ENCODE measurements at regions of chr1 and their contacts with region 1.

Region 1: GRCh38 chr1:165597883-165598675 is 33.0 kb upstream of the MGST3 start:
- DNase-seq: peak; percentile 98
- H3K4me3 ChIP-seq: peak overlapping the region; percentile 50
- H3K27ac ChIP-seq: peak overlapping the region; percentile 58
- H3K4me1 ChIP-seq: no peaks in the 10 kb centered on the region
- H3K27me3 ChIP-seq: peaks cover 15% of the 10 kb centered on the region
- CTCF ChIP-seq: no peak

Region 2: GRCh38 chr1:165129568-165130164 is 468.4 kb before region 1 on chr1:
- CTCF ChIA-PET with region 1: no interaction called
- POLR2A ChIA-PET with region 1: no interaction called
- intact Hi-C with region 1: loop called (anchors 5 kb)
- DNase-seq: peak; percentile 81
- H3K4me3 ChIP-seq: no peak overlapping the region
- H3K27ac ChIP-seq: no peak overlapping the region
- H3K4me1 ChIP-seq: no peaks in the 10 kb centered on the region
- H3K27me3 ChIP-seq: peaks cover 59% of the 10 kb centered on the region
- CTCF ChIP-seq: peak; percentile 91

Region 3: GRCh38 chr1:165257969-165258459 is 340.1 kb before region 1 on chr1:
- CTCF ChIA-PET with region 1: no interaction called
- POLR2A ChIA-PET with region 1: no interaction called
- intact Hi-C with region 1: loop called (anchors 2 kb)
- DNase-seq: peak; percentile 86
- H3K4me3 ChIP-seq: no peak overlapping the region
- H3K27ac ChIP-seq: no peak overlapping the region
- H3K4me1 ChIP-seq: no peaks in the 10 kb centered on the region
- H3K27me3 ChIP-seq: peaks cover 1% of the 10 kb centered on the region
- CTCF ChIP-seq: peak; percentile 93

Region 4: DNA sequence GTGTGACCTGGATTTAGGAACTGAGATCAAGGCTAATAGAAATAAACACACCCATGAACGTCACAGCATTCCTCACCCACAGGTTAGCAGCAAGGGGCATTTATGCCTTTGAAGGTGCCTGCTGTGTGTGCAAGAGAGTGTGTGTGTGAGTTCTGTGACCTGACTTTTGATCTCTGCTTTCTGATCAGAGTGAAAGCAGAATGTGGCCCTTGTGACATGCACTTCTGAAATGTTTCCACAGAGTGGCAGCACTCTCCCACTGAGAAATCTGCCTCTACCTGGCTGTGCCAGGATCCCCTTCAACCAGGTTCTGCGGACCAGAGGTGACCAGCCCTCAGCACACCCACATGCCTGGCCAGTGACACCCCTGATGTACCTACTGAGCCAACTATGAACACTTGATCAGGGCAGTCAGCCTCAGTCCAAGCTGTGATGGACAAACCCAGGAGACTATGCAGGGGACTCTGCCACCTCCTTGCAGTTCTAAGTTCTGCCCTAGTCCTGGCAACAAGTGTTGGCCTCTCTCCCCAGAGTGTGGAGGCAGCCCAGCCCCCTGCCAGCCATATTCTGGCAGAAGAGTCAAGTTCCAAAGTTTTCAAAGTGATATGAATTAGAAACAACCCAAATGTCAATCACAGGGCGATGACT is 194.1 kb before region 1 on chr1:
- CTCF ChIA-PET with region 1: no interaction called
- POLR2A ChIA-PET with region 1: interaction called, 3 read pairs
- intact Hi-C with region 1: loop called (anchors 1 kb)
- DNase-seq: no peak
- H3K4me3 ChIP-seq: no peak overlapping the region
- H3K27ac ChIP-seq: no peak overlapping the region
- H3K4me1 ChIP-seq: no peaks in the 10 kb centered on the region
- H3K27me3 ChIP-seq: no peaks in the 10 kb centered on the region
- CTCF ChIP-seq: peak; percentile 66

Region 5: GRCh38 chr1:165914136-165914798 is 316.2 kb after region 1 on chr1:
- CTCF ChIA-PET with region 1: interaction called, 5 read pairs
- POLR2A ChIA-PET with region 1: no interaction called
- intact Hi-C with region 1: loop called (anchors 2 kb)
- DNase-seq: peak; percentile 79
- H3K4me3 ChIP-seq: no peak overlapping the region
- H3K27ac ChIP-seq: no peak overlapping the region
- H3K4me1 ChIP-seq: no peaks in the 10 kb centered on the region
- H3K27me3 ChIP-seq: no peaks in the 10 kb centered on the region
- CTCF ChIP-seq: peak; percentile 90

Measured in A673 (cell line).